GM12878 (cell line): ENCODE measurements at regions of chr5 and their contacts with region 1.

Region 1: GRCh38 chr5:163505368-163506094 is at the start of gene MAT2B:
- DNase-seq: peak; percentile 74
- ATAC-seq: peak; percentile 92
- H3K4me3 ChIP-seq: peak within 1 kb of the TSS; percentile 84
- H3K27ac ChIP-seq: peak within 1 kb of the TSS; percentile 43
- H3K4me1 ChIP-seq: peaks cover 3% of the 10 kb centered on the region; the same call in 1 of the 2 replicates
- H3K27me3 ChIP-seq: no peaks in the 10 kb centered on the region
- CTCF ChIP-seq: peak; percentile 55 to 61 (median 57)
- EP300 ChIP-seq: peak; percentile 39 to 52; a peak in 2 of 4 replicates
- POLR2A ChIP-seq: peak; percentile 98
- RAD21 ChIP-seq: no peak
- polyA plus RNA-seq, gene MAT2B: 65.5 to 77.7 TPM

Region 2: GRCh38 chr5:163094492-163095180 is 410.9 kb before region 1 on chr5:
- CTCF ChIA-PET with region 1: no interaction called
- POLR2A ChIA-PET with region 1: no interaction called
- RAD21 ChIA-PET with region 1: no interaction called
- SMC1A ChIA-PET with region 1: no interaction called
- in situ Hi-C with region 1: no loop called
- intact Hi-C with region 1: loop called (anchors 5 kb)
- DNase-seq: peak; percentile 53
- ATAC-seq: peak; percentile 94
- H3K4me3 ChIP-seq: peak overlapping the region; percentile 9; the same call in 1 of the 2 replicates
- H3K27ac ChIP-seq: peak overlapping the region; percentile 90
- H3K4me1 ChIP-seq: peaks cover 10% of the 10 kb centered on the region
- H3K27me3 ChIP-seq: no peaks in the 10 kb centered on the region
- CTCF ChIP-seq: no peak
- EP300 ChIP-seq: peak; percentile 38 to 60; a peak in 3 of 4 replicates
- POLR2A ChIP-seq: no peak
- RAD21 ChIP-seq: no peak

Region 3: GRCh38 chr5:163437309-163438182 is 68.0 kb before region 1 on chr5 and contains the start of gene CCNG1:
- CTCF ChIA-PET with region 1: interaction called, 3 read pairs
- POLR2A ChIA-PET with region 1: interaction called, 7 read pairs
- RAD21 ChIA-PET with region 1: interaction called, 8 read pairs
- SMC1A ChIA-PET with region 1: interaction called, 5 read pairs
- in situ Hi-C with region 1: no loop called
- intact Hi-C with region 1: loop called (anchors 1 kb)
- DNase-seq: peak; percentile 88
- ATAC-seq: peak; percentile 95
- H3K4me3 ChIP-seq: peak within 1 kb of the TSS; percentile 93
- H3K27ac ChIP-seq: peak within 1 kb of the TSS; percentile 86
- H3K4me1 ChIP-seq: no peaks in the 10 kb centered on the region; the same call in 1 of the 2 replicates
- H3K27me3 ChIP-seq: no peaks in the 10 kb centered on the region
- CTCF ChIP-seq: no peak
- EP300 ChIP-seq: no peak
- POLR2A ChIP-seq: peak; percentile 100
- RAD21 ChIP-seq: no peak
- polyA plus RNA-seq, gene CCNG1: 200 to 274 TPM

Region 4: DNA sequence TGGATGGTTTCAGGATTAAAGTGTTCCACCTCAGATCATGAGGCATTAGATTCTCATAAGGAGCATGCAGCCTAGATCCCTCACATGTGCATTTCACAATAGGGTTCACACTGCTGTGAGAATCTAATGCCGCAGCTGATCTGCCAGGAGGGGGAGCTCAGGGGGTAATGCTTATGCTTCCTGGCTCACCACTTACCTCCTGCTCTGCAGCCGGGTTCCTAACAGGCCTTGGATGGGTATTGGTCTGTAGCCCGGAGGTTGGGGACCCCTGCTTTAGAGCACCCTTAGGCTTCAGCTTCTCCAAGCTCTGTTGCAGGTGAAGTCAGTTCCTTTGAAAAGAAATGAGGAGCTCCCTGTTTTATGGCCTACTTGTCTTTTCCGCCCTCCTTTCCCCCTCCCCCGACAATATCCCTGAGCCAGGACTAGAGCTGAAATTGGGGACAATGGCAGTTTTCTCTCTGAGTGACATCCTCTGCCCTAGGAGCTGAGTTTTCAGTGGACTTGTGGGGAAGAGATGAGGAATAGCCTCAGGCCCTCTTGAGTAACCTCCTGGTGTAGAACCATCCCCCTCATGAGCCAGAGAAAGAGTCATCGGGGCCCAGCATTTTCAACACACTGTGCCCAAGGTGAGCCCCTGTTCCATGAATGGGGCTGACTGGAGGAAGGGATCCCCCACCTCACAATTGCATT is 16.3 kb before region 1 on chr5:
- CTCF ChIA-PET with region 1: interaction called, 14 read pairs
- POLR2A ChIA-PET with region 1: interaction called, 4 read pairs
- RAD21 ChIA-PET with region 1: no interaction called
- SMC1A ChIA-PET with region 1: interaction called, 3 read pairs
- in situ Hi-C with region 1: no loop called
- intact Hi-C with region 1: no loop called
- DNase-seq: no peak
- ATAC-seq: peak; percentile 41; the same call in 2 of the 3 replicates
- H3K4me3 ChIP-seq: no peak overlapping the region
- H3K27ac ChIP-seq: no peak overlapping the region
- H3K4me1 ChIP-seq: no peaks in the 10 kb centered on the region
- H3K27me3 ChIP-seq: no peaks in the 10 kb centered on the region
- CTCF ChIP-seq: peak; percentile 7 to 21 (median 15); a peak in 2 of 6 replicates
- EP300 ChIP-seq: no peak
- POLR2A ChIP-seq: no peak
- RAD21 ChIP-seq: no peak